ENCODE measurements at regions of chrX and their contacts with region 1.

Region 1: DNA sequence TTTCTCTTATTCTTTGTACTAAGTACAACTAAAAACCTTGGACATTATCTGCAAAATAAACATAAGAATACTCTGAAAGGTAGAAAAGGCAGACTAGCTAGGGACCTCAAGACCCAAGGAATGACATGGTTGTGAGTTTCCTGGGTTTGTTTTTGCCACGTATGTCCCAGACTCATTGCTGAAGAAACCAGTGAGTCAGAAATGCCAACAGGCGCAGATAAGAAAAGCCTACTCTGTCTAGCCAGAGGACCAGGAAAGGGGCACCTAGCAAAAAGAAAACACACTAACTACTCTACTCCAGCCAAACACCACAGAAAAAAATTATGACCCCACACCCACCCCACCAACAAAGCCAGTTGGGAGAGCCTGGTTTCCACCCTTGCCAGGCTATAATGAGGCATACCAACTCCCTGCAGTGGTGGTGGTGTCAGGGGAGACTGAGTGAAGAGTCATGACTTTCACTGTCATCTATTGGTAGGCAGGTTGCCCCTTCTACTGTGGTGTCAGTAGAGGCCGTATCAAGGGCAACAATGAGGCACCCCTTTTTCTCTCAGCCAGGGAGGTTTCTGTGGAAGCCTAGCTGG is 10.9 kb downstream of the MTMR1 start:
- DNase-seq: no peak
- ATAC-seq: no peak
- H3K4me3 ChIP-seq: no peak overlapping the region
- H3K4me3 Mint-ChIP-seq: no peak overlapping the region
- H3K27ac ChIP-seq: peak overlapping the region in 1 of 2 donors; percentile 22
- H3K27ac Mint-ChIP-seq: no peak overlapping the region
- H3K4me1 ChIP-seq: peaks cover 8% of the 10 kb centered on the region in 2 donors
- H3K4me1 Mint-ChIP-seq: peaks cover 25% of the 10 kb centered on the region
- H3K27me3 ChIP-seq: no peaks in the 10 kb centered on the region
- H3K27me3 Mint-ChIP-seq: no peaks in the 10 kb centered on the region
- CTCF ChIP-seq: no peak

Region 2: DNA sequence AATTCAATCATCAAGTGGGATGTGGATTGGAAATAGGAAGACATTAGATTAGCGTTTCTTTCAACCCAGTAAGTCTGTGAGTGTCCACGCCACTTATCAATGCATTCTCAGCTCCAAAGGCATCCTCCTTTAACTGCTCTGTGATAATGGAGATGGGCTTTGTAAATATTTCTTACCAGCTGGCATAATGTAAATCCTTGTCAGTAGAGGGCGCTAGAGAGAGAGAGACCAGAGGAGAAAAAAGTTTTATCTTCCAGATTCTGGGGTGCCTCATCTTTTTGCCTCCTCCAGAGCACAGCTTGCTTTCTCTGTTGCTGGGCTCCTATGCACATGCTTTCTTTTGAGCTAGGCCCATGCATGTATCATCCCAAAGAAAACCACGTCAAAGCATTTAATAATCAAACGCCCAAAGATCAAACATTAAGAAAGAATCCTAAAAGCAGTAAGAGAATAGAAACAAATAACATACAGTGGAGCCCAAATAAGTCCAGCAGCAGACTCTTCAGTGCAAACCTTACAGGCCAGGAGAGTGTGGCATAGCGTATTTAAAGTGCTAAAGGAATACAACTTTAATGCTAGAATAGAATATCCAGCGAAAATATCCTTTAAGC is 20.5 kb before region 1 on chrX:
- CTCF ChIA-PET with region 1: interaction called, 19 read pairs
- POLR2A ChIA-PET with region 1: no interaction called
- intact Hi-C with region 1: no loop called
- DNase-seq: peak; percentile 69
- ATAC-seq: peak; percentile 39
- H3K4me3 ChIP-seq: no peak overlapping the region
- H3K4me3 Mint-ChIP-seq: no peak overlapping the region
- H3K27ac ChIP-seq: no peak overlapping the region
- H3K27ac Mint-ChIP-seq: no peak overlapping the region
- H3K4me1 ChIP-seq: peaks cover under 1 to 8% of the 10 kb centered on the region in 2 donors
- H3K4me1 Mint-ChIP-seq: peaks cover 7% of the 10 kb centered on the region
- H3K27me3 ChIP-seq: no peaks in the 10 kb centered on the region
- H3K27me3 Mint-ChIP-seq: no peaks in the 10 kb centered on the region
- CTCF ChIP-seq: peak; percentile 70

Measured in B cell (primary cell).